Heart right ventricle (tissue), 16 donors: ENCODE measurements at regions of chr16 and their contacts with region 1.

Region 1: GRCh38 chr16:2867987-2868789 is 10.2 kb upstream of the PRSS22 start:
- DNase-seq: peak; percentile 95
- ATAC-seq: peak; percentile 96 to 99 (median 98)
- H3K4me3 ChIP-seq: peak overlapping the region; percentile 45 to 86 (median 65)
- H3K27ac ChIP-seq: peak overlapping the region; percentile 89 to 98 (median 95)
- H3K4me1 ChIP-seq: peaks cover 0 to 13% (median 5%) of the 10 kb centered on the region in 9 donors
- H3K27me3 ChIP-seq: no peaks in the 10 kb centered on the region
- CTCF ChIP-seq: peak; percentile 98 to 100 (median 99)

Region 2: GRCh38 chr16:2777231-2777902 is 90.8 kb before region 1 on chr16 and contains the start of gene ELOB:
- intact Hi-C with region 1: loop called in 1 of 10 experiments (anchors 10 kb)
- DNase-seq: peak; percentile 87 to 90
- ATAC-seq: peak; percentile 92 to 98 (median 94)
- H3K4me3 ChIP-seq: peak within 1 kb of the TSS; percentile 81 to 100 (median 98)
- H3K27ac ChIP-seq: peak within 1 kb of the TSS; percentile 98 to 100 (median 100)
- H3K4me1 ChIP-seq: peaks cover 9 to 43% (median 28%) of the 10 kb centered on the region in 9 donors
- H3K27me3 ChIP-seq: no peaks in the 10 kb centered on the region
- CTCF ChIP-seq: no peak
- total RNA-seq, gene ELOB: 248 to 373 (median 323) TPM

Region 3: GRCh38 chr16:2838928-2839327 is 29.3 kb before region 1 on chr16:
- intact Hi-C with region 1: loop called in 4 of 10 experiments (anchors 1 to 2 kb)
- DNase-seq: peak; percentile 44 to 56
- ATAC-seq: peak in 7 of 8 donors; percentile 74 to 87 (median 79)
- H3K4me3 ChIP-seq: no peak overlapping the region
- H3K27ac ChIP-seq: no peak overlapping the region
- H3K4me1 ChIP-seq: peaks cover 7 to 35% (median 14%) of the 10 kb centered on the region in 9 donors
- H3K27me3 ChIP-seq: peaks cover 0 to 13% (median 0%) of the 10 kb centered on the region in 7 donors
- CTCF ChIP-seq: peak; percentile 22 to 89 (median 75)

Region 4: DNA sequence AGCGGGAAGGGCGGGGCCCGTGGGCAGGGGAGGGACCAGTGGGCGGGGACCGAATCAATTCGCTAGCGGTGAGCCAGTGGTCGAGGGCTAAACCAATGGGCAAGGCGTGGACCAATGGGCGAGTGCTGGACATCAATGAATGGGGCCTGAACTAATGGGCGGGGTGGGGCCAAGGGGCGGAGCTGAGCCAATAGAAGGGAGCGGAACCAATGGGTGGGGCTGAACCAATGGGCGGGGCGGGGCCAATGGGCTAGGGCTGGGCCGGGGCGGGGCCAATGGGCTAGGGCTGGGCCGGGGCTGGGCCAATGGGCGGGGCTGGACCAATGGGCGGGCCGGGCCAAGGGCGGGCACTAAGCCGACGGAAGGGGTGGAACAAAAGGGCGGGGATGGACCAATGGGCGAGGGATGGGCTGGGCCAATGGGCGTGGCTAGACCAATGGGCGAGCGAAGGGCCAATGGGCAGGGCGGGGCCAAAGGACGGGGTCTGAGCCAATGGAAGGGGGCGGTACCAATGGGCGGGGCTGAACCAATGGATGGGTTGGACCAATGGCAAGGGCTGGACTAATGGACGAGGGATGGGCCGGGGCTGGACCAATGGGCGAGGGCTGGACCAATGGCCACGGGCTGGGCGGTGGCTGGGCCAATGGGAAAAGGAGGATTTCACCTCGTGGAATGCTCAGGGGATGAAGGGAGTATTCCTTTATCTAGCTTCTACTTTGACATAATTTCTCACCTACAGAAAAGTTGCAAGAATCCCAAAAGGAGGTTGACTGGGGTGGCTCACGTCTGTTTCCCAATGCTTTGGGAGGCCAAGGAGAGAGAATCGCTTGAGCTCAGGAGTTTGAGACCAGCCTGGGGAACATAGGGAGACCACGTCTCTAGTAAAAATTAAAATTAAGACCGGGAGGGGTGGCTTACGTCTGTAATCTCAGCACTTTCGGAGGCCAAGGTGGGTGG is 37.5 kb after region 1 on chr16:
- intact Hi-C with region 1: loop called in 3 of 10 experiments (anchors 1 to 5 kb)
- DNase-seq: peak; percentile 99
- ATAC-seq: peak; percentile 85 to 94 (median 90)
- H3K4me3 ChIP-seq: peak overlapping the region in 9 of 10 donors; percentile 83 to 98 (median 90)
- H3K27ac ChIP-seq: peak overlapping the region; percentile 93 to 99 (median 97)
- H3K4me1 ChIP-seq: peaks cover 3 to 22% (median 15%) of the 10 kb centered on the region in 9 donors
- H3K27me3 ChIP-seq: no peaks in the 10 kb centered on the region
- CTCF ChIP-seq: no peak

Region 5: GRCh38 chr16:2911580-2912329 is 43.6 kb after region 1 on chr16 and contains the start of gene FLYWCH1:
- intact Hi-C with region 1: loop called in 3 of 10 experiments (anchors 2 to 5 kb)
- DNase-seq: peak; percentile 98 to 99
- ATAC-seq: peak; percentile 96 to 98 (median 97)
- H3K4me3 ChIP-seq: peak within 1 kb of the TSS; percentile 71 to 97 (median 87)
- H3K27ac ChIP-seq: peak within 1 kb of the TSS; percentile 71 to 97 (median 91)
- H3K4me1 ChIP-seq: peaks cover 0 to 30% (median 17%) of the 10 kb centered on the region in 9 donors
- H3K27me3 ChIP-seq: no peaks in the 10 kb centered on the region
- CTCF ChIP-seq: peak in 1 of 9 donors; percentile 9
- total RNA-seq, gene FLYWCH1: 27.1 to 42.3 (median 32.8) TPM

Region 6: GRCh38 chr16:3158471-3159314 is 290.5 kb after region 1 on chr16:
- intact Hi-C with region 1: no loop called
- DNase-seq: peak; percentile 85 to 88
- ATAC-seq: peak; percentile 87 to 91 (median 89)
- H3K4me3 ChIP-seq: peak overlapping the region; percentile 56 to 87 (median 74)
- H3K27ac ChIP-seq: peak overlapping the region; percentile 76 to 94 (median 91)
- H3K4me1 ChIP-seq: peaks cover 0 to 26% (median 23%) of the 10 kb centered on the region in 9 donors
- H3K27me3 ChIP-seq: peaks cover 0 to 7% (median 0%) of the 10 kb centered on the region in 7 donors
- CTCF ChIP-seq: peak in 3 of 9 donors; percentile 10 to 12 (median 11)